ENCODE measurements at regions of chr1 and their contacts with region 1.

Region 1: DNA sequence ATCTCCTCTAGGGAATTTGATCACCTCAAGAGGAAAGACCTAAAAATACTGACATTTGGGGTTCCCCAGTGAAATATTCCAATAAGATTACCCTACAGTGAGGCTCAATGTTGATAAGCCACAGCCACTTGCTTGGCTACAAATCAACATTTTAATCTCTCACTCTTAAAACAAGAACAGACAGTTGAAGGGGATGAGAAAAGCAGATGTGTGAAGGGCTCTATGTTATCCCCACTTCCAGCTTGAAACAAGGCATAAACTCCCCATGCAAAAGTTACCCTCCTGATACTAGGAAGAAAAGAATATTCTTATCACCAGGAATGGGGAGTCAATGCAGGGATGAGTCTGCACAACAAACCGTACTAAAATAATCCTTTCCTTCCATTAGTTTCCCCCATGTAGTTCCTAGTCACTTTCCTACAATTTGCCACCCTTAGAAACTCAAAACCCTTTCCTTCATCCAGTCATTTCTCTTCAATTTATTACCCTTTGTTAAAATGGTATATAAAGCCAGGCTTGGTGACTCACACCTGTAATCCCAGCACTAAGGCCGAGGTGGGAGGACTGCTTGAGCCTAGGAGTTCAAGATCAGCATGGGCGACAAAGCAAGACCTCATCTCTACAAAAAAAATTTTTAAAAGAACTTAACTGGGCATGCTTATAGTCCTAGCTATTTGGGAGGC is 29.5 kb downstream of the LPGAT1 start:
- DNase-seq: no peak

Region 2: DNA sequence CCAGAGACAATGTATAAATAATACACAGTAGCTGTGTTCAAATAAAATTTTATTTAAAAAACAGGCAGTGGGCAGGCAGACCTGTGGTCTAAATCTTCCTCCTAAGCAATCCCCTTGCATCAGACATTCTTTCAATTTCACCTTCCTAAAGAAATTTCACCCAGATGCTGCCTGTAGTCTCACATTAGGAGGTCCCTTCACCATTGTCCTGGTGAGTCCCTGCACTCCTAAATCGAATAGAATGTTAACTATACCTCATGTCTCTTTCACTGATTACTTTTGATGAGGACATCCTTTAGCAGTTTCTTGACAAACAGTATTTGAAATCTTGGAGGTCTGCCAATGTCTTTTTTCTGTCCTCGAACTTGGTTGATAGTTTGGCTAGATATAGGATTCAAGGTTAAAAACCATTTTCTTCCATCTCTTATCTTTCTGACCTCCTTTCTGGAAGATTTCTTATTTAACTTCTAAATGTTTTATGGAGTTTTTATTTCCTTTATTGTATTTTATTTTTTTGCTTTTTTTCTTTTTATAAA is 48.0 kb before region 1 on chr1:
- intact Hi-C with region 1: no loop called
- DNase-seq: no peak

Region 3: GRCh38 chr1:211813590-211813989 is 12.5 kb after region 1 on chr1:
- intact Hi-C with region 1: loop called in 1 of 2 experiments (anchors 1 kb)
- DNase-seq: no peak